Dendritic cell treated with granulocyte-macrophage colony-stimulating factor and Interleukin-4, amounts not matched to agents 40 ng/mL and 50 ng/mL, for 4 days (primary cell): ENCODE measurements at regions of chr11 and their contacts with region 1.

Region 1: GRCh38 chr11:9060700-9061111 is 30.7 kb downstream of the SCUBE2 start:
- H3K4me3 Mint-ChIP-seq: peak overlapping the region; percentile 26
- H3K27ac Mint-ChIP-seq: no peak overlapping the region
- H3K4me1 Mint-ChIP-seq: peaks cover 42% of the 10 kb centered on the region
- H3K27me3 Mint-ChIP-seq: peaks cover 5% of the 10 kb centered on the region

Region 2: DNA sequence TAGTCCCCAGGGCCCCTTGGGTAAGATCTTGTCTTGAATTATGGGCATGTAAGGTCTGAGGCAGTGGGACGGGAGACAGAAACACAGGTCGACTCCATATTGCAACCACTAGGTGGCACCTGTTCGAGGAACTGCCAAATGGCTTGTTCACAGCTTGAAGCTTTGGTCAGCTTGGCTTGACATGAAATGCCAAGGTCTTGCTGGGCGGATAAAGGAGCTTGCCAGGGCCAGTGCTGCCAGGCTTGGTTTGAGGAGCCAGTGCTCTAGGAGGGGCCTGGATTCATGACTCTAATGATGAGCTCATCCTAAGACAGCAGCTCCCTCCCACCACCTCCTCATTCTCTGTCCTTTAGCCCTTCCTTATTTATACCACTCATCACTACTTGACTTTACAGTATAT is 45.0 kb before region 1 on chr11:
- intact Hi-C with region 1: loop called (anchors 5 kb)
- H3K4me3 Mint-ChIP-seq: no peak overlapping the region
- H3K27ac Mint-ChIP-seq: no peak overlapping the region
- H3K4me1 Mint-ChIP-seq: peaks cover 32% of the 10 kb centered on the region
- H3K27me3 Mint-ChIP-seq: peaks cover 4% of the 10 kb centered on the region